B cell (primary cell): ENCODE measurements at regions of chr18 and their contacts with region 1.

Region 1: GRCh38 chr18:13611601-13612195 is 114.7 kb downstream of the FAM210A start:
- DNase-seq: no peak
- ATAC-seq: peak; percentile 5
- H3K4me3 ChIP-seq: peak overlapping the region; percentile 48 to 71 (median 62)
- H3K4me3 Mint-ChIP-seq: peak overlapping the region; percentile 86
- H3K27ac ChIP-seq: peak overlapping the region; percentile 29 to 86
- H3K27ac Mint-ChIP-seq: peak overlapping the region; percentile 94
- H3K4me1 ChIP-seq: peaks cover 68 to 81% of the 10 kb centered on the region in 2 donors
- H3K4me1 Mint-ChIP-seq: peaks cover 84% of the 10 kb centered on the region
- H3K27me3 ChIP-seq: no peaks in the 10 kb centered on the region
- H3K27me3 Mint-ChIP-seq: no peaks in the 10 kb centered on the region
- CTCF ChIP-seq: no peak

Region 2: DNA sequence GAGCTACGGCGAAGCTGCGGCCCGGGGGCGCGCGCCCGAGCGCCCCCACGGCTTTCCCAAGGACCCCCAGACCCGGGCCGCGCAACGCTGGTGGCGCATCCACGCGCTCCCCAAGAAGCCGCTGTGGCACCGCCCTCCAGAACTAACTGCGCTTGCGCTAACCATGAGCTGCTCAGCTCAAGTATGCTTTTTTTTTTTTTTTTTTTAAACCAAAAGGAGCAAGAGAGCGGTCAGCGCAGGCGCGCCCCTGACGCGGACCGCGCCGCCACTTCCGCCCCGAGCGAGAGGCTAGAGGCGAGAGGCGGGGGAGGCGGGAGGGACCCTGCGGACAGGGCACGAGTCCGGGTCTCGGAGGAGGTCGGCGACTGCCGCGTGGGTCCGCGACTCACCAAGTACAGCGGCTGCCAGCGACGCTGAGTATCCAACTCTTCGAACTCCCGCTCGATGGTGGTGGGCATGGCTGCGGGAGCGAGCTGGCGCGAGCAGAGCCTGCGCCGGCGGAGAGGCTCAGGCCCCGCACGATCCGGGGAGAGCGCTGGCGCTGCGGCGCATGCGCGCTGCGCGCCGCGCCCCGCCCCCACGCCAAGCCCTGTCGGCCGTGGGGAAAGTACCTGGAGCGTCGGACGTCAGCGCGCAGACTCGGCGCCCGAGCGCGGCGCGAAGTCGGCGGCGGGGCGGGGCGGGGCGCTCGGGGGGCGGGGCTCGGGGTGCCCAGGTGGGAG is 727.9 kb before region 1 on chr18 and contains the start of gene PTPN2:
- CTCF ChIA-PET with region 1: no interaction called
- POLR2A ChIA-PET with region 1: no interaction called
- intact Hi-C with region 1: loop called (anchors 10 kb)
- DNase-seq: peak; percentile 97
- ATAC-seq: peak; percentile 76
- H3K4me3 ChIP-seq: peak within 1 kb of the TSS; percentile 66 to 92 (median 78)
- H3K4me3 Mint-ChIP-seq: peak within 1 kb of the TSS; percentile 89
- H3K27ac ChIP-seq: peak within 1 kb of the TSS; percentile 99
- H3K27ac Mint-ChIP-seq: peak within 1 kb of the TSS; percentile 95
- H3K4me1 ChIP-seq: peaks cover 64 to 71% of the 10 kb centered on the region in 2 donors
- H3K4me1 Mint-ChIP-seq: peaks cover 71% of the 10 kb centered on the region
- H3K27me3 ChIP-seq: no peaks in the 10 kb centered on the region
- H3K27me3 Mint-ChIP-seq: no peaks in the 10 kb centered on the region
- CTCF ChIP-seq: no peak
- total RNA-seq, gene PTPN2: 64.8 and 75.5 TPM in 2 replicates

Region 3: GRCh38 chr18:13137670-13138419 is 473.9 kb before region 1 on chr18:
- CTCF ChIA-PET with region 1: no interaction called
- POLR2A ChIA-PET with region 1: no interaction called
- intact Hi-C with region 1: loop called (anchors 5 kb)
- DNase-seq: peak; percentile 85
- ATAC-seq: peak; percentile 90
- H3K4me3 ChIP-seq: peak overlapping the region; percentile 58 to 98 (median 84)
- H3K4me3 Mint-ChIP-seq: peak overlapping the region; percentile 100
- H3K27ac ChIP-seq: peak overlapping the region; percentile 65 to 86
- H3K27ac Mint-ChIP-seq: peak overlapping the region; percentile 99
- H3K4me1 ChIP-seq: peaks cover 6 to 11% of the 10 kb centered on the region in 2 donors
- H3K4me1 Mint-ChIP-seq: peaks cover 24% of the 10 kb centered on the region
- H3K27me3 ChIP-seq: no peaks in the 10 kb centered on the region
- H3K27me3 Mint-ChIP-seq: no peaks in the 10 kb centered on the region
- CTCF ChIP-seq: no peak

Region 4: DNA sequence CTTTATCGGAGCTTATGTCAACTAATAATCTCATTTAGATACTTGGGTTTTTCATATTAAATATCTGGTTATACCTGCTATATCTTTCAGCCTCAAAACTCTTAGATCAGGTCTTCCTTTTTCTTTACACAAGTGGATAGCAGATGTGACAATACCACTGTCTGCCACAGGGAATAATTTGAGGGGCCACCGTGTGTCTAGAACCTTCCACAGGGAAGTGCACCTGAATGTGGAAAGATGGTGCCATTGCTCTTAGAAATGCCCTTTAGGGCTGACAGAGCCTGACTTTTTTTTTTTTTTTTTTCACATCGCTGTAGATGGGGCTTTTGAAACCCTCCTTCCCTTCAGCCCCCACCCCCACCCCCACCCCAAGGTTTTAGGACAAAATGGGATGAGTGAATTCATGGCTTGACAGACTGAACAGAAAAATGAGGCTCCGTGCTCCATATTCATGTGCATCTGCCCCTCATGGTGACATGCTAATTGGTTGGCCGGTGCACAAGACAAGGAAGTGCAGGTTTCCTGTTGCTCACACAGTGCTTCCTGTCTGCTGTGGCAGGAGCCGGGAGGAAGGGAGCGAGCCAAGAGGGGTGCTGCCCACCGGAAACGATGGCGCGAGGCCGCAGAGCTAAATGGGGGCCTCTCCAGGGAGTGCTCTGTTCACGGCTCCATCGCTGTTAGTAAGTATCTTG is 147.1 kb before region 1 on chr18:
- CTCF ChIA-PET with region 1: interaction called, 3 read pairs
- POLR2A ChIA-PET with region 1: no interaction called
- intact Hi-C with region 1: loop called (anchors 5 kb)
- DNase-seq: peak; percentile 76
- ATAC-seq: peak; percentile 91
- H3K4me3 ChIP-seq: peak overlapping the region; percentile 45 to 94 (median 72)
- H3K4me3 Mint-ChIP-seq: peak overlapping the region; percentile 92
- H3K27ac ChIP-seq: peak overlapping the region; percentile 58 to 79
- H3K27ac Mint-ChIP-seq: peak overlapping the region; percentile 94
- H3K4me1 ChIP-seq: peaks cover 16 to 19% of the 10 kb centered on the region in 2 donors
- H3K4me1 Mint-ChIP-seq: peaks cover 32% of the 10 kb centered on the region
- H3K27me3 ChIP-seq: no peaks in the 10 kb centered on the region
- H3K27me3 Mint-ChIP-seq: no peaks in the 10 kb centered on the region
- CTCF ChIP-seq: no peak

Region 5: DNA sequence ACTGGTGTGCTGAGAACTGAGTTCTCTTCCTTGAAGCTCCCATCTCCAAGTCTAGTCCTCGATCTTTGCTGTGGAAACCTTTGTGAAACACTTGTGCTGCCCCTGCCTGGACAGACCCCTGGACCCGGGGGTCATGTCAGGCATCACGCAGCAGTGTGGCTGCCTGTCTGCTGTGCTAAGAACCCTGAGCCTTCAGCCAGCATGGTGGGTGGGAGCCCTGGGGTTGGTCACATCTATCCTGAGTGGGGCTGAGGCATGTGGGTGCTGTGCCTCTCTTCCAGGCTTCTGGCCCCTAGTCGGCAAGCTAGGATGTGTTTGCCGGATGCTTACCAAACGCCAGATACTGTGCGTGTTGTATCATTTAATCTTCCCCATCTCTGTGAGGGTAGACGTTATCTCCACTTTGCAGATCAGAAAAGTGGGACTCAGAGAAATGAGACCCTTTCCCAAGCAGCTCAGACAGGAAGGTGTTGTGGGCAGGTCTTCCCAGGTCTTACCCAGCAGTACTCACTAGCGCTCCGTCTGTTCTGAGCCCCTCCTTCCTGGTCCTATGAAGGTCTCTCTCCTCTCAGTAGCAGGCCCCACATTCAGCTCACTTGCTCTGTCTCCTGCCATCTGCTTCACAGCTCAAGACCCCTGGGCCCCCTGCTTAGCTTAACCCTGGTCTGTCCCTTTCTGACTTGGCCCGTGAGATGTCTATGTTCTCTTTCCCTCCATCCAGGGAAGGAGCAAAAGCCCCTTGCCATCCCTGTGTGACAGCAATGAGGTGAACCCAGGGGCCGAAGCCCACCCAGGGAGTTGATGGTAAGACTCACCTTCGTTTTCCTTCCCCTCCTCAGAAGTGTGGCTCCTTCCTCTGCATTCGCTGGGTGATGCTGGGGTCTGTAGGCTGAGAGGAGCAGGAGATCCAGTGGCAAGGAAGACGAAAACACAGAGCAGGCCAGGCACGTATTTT is 128.1 kb before region 1 on chr18:
- CTCF ChIA-PET with region 1: no interaction called
- POLR2A ChIA-PET with region 1: no interaction called
- intact Hi-C with region 1: no loop called
- DNase-seq: no peak
- ATAC-seq: no peak
- H3K4me3 ChIP-seq: no peak overlapping the region
- H3K4me3 Mint-ChIP-seq: no peak overlapping the region
- H3K27ac ChIP-seq: no peak overlapping the region
- H3K27ac Mint-ChIP-seq: peak overlapping the region; percentile 20
- H3K4me1 ChIP-seq: peaks cover 20 to 21% of the 10 kb centered on the region in 2 donors
- H3K4me1 Mint-ChIP-seq: peaks cover 40% of the 10 kb centered on the region
- H3K27me3 ChIP-seq: no peaks in the 10 kb centered on the region
- H3K27me3 Mint-ChIP-seq: no peaks in the 10 kb centered on the region
- CTCF ChIP-seq: no peak

Region 6: DNA sequence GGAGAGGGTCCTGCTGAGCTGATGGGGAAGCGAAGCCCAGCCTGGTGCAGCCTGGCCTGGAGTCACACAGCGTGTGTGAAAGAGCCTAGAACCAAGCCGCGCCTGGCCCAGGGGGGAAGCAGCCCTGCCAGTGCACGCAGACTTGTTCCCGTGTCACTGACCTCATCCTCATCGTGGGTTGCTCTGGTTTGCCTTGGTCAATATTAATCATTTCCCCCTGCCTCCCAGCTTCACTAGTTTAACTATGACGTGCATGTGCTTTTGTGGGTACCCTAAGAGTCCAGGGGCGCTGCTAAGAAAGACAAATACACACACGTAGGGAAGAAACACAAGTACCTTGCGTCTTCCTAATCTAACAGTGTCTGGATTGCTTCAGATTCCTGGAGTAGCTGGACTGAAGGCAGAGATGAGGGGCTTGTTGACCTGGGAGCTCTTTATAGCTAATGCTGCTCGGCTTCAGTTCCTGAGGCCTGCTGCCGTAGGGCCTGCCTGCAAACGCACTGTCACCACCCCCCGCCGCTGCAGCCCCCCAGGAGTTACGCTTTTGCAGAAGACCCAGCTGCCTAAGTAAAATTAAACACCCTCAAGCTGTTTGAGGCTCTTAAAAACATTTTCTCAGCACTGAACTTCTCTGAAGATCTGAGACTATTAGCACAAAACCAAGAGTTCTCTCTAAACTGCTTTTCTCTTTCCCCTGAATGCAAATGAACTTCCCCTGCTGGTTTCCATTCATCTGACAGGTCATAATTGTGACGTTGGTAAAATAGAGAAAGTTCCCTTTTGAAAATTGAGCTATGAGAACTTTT is 44.6 kb before region 1 on chr18:
- CTCF ChIA-PET with region 1: interaction called, 195 read pairs
- POLR2A ChIA-PET with region 1: interaction called, 31 read pairs
- intact Hi-C with region 1: loop called (anchors 1 kb)
- DNase-seq: peak; percentile 88
- ATAC-seq: peak; percentile 60
- H3K4me3 ChIP-seq: peak overlapping the region; percentile 26 to 53 (median 35)
- H3K4me3 Mint-ChIP-seq: peak overlapping the region; percentile 88
- H3K27ac ChIP-seq: peak overlapping the region; percentile 97
- H3K27ac Mint-ChIP-seq: peak overlapping the region; percentile 95
- H3K4me1 ChIP-seq: peaks cover 67 to 72% of the 10 kb centered on the region in 2 donors
- H3K4me1 Mint-ChIP-seq: peaks cover 75% of the 10 kb centered on the region
- H3K27me3 ChIP-seq: no peaks in the 10 kb centered on the region
- H3K27me3 Mint-ChIP-seq: no peaks in the 10 kb centered on the region
- CTCF ChIP-seq: no peak

Region 7: DNA sequence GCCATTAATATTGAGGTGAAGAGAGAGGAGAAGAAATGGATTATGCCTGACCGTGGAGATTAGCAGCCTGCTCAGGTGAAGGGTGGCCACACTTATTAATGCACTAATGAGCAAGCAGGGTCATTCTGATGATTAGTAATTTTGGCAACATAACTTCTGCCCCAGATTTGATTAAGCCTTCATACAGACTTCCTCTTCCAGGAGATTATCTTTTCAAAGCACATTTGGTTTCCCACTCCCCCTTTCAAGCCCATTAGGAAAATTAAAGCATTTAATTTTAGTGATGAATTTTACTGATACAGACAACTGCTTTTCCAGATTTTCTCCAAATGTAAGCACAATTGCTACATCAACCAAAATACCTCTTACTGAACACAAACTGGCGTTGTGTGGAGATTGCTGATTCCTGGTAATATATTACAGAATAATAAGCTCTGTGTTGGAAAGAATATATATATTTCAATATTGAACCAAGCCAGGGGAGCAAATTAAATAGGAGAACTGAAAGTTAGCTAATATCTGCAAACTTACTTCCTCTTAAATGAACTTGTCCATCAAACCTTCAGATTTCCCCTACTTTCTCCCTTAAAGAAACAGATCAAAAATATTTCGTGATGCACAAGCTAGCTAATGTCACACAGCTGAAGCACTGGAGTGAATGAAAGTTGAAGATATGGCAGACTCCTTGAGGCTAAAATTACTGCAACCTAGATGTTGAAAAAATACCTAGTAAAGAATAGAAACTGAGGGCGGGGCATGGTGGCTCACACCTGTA is 26.1 kb before region 1 on chr18:
- CTCF ChIA-PET with region 1: interaction called, 7 read pairs
- POLR2A ChIA-PET with region 1: interaction called, 22 read pairs
- intact Hi-C with region 1: loop called (anchors 1 kb)
- DNase-seq: peak; percentile 77
- ATAC-seq: peak; percentile 78
- H3K4me3 ChIP-seq: peak overlapping the region in 1 of 5 experiments; percentile 21
- H3K4me3 Mint-ChIP-seq: peak overlapping the region; percentile 74
- H3K27ac ChIP-seq: peak overlapping the region; percentile 50 to 76
- H3K27ac Mint-ChIP-seq: peak overlapping the region; percentile 83
- H3K4me1 ChIP-seq: peaks cover 31 to 34% of the 10 kb centered on the region in 2 donors
- H3K4me1 Mint-ChIP-seq: peaks cover 50% of the 10 kb centered on the region
- H3K27me3 ChIP-seq: no peaks in the 10 kb centered on the region
- H3K27me3 Mint-ChIP-seq: no peaks in the 10 kb centered on the region
- CTCF ChIP-seq: no peak

Region 8: GRCh38 chr18:13629841-13630715 is 18.4 kb after region 1 on chr18:
- CTCF ChIA-PET with region 1: interaction called, 42 read pairs
- POLR2A ChIA-PET with region 1: no interaction called
- intact Hi-C with region 1: loop called (anchors 1 kb)
- DNase-seq: peak; percentile 82
- ATAC-seq: peak; percentile 95
- H3K4me3 ChIP-seq: no peak overlapping the region
- H3K4me3 Mint-ChIP-seq: peak overlapping the region; percentile 55
- H3K27ac ChIP-seq: no peak overlapping the region
- H3K27ac Mint-ChIP-seq: peak overlapping the region; percentile 42
- H3K4me1 ChIP-seq: peaks cover 5 to 6% of the 10 kb centered on the region in 2 donors
- H3K4me1 Mint-ChIP-seq: peaks cover 18% of the 10 kb centered on the region
- H3K27me3 ChIP-seq: no peaks in the 10 kb centered on the region
- H3K27me3 Mint-ChIP-seq: no peaks in the 10 kb centered on the region
- CTCF ChIP-seq: peak; percentile 95